Motor neuron (in vitro differentiated cells): ENCODE measurements at regions of chr9 and their contacts with region 1.

Region 1: GRCh38 chr9:2638871-2639673 is 17.5 kb downstream of the VLDLR start:
- ATAC-seq: peak in 2 of 8 experiments; percentile 25 to 40
- H3K4me3 ChIP-seq: no peak overlapping the region
- H3K27ac ChIP-seq: no peak overlapping the region
- H3K4me1 ChIP-seq: peaks cover 7 to 15% of the 10 kb centered on the region in 2 donors

Region 2: DNA sequence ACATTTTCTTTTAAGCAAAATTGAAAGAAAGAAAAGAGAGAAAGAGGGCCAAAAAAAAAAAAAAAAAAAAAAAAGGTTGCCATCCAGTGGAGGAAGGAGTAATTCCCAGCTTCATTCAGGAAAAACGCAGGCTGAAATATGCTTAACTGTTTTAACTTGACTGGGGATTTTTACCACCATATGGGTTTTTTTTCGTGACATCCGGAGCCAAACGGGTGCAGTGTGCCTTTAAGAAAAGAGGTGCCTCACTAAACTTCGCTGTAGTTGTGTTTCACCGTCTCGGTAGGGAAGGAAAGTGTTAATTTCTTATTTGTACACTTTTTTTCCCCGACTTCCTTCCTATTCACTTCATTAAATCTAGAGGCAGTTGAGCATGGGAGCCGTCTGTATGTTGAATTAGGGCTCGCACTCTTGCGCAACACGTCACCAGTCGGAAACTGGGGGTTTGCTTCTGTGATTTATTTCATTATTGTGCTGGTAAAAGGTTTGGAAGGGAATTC is 480.9 kb before region 1 on chr9:
- in situ Hi-C with region 1: loop called in 1 of 9 experiments (anchors 25 kb)
- ATAC-seq: peak; percentile 37 to 69 (median 49)
- H3K4me3 ChIP-seq: peak overlapping the region; percentile 12 to 35 (median 26)
- H3K27ac ChIP-seq: peak overlapping the region; percentile 41 to 83
- H3K4me1 ChIP-seq: peaks cover 29 to 43% of the 10 kb centered on the region in 2 donors

Region 3: DNA sequence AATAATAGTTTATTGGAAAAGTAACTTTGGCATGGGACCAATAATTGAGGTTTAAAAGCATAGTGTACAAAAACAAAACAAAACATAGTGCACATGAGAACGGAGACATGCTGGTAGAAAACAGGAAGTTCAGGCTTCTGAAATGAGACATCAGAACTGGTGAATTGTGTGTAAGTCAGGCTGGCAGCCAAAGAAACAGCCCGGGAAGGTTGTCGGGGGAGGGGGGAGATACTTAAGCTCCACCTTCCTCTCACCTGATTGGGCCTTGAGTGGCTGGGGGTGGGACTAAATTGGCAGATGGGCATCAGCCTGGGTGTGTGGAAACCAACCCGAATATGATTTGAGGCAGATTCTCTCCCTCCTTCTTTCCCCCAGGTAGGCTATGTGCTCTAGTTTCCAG is 367.6 kb before region 1 on chr9:
- in situ Hi-C with region 1: loop called in 1 of 9 experiments (anchors 25 kb)
- ATAC-seq: no peak
- H3K4me3 ChIP-seq: no peak overlapping the region
- H3K27ac ChIP-seq: no peak overlapping the region
- H3K4me1 ChIP-seq: peaks cover 12 to 28% of the 10 kb centered on the region in 2 donors

Region 4: DNA sequence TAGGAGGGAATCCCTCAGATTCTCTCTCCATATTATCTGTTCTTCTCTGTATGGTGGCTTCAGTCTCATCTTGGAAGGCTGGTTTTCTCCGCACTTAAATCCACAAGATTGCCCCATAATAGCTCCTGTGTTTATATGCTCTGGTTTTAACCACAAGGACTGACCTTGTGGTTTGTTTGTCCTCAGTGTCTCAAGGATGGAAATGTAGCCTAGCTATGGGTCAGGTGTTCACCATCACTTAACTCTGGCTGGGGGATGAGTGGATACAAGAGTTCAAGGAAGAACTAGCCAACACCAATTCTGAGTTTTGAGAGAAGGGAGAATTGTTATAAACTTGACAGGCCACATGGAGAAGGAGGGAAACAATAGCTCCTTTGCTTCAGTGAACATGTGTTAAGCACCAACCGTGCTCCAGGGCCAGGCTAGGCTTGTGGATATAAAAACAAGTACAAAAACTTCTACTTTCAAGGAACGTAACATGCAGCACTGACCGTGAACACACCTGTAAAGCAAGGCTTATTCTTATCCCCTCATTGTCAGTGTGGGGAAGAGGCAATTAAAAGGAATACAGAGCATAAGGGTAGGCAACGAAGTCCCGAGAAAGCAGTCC is 93.1 kb before region 1 on chr9:
- in situ Hi-C with region 1: no loop called
- ATAC-seq: no peak
- H3K4me3 ChIP-seq: no peak overlapping the region
- H3K27ac ChIP-seq: no peak overlapping the region
- H3K4me1 ChIP-seq: no peaks in the 10 kb centered on the region